AG04450 (cell line): ENCODE measurements at regions of chr12 and their contacts with region 1.

Region 1: DNA sequence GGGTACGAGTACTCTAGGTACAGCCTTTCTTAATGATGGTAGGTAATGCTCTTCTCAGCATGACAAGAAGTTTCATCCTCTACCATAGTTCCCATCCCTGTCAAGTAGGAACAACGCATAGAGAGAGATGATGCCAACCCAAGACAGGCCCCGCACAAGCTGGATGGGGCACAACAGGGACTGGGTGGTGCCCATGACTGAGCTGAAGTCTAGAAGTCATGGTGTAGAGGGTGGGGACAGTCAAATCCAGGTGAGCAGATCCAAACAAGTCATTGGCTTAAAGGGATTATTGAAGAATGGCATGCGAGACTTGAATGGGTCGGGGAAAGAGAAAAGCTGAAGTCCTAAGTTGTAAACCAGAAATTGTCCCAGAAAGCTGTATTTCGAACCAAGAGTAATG is 84.2 kb upstream of the MDM1 start:
- DNase-seq: no peak
- H3K4me3 ChIP-seq: no peak overlapping the region
- H3K27ac ChIP-seq: no peak overlapping the region
- H3K27me3 ChIP-seq: no peaks in the 10 kb centered on the region
- CTCF ChIP-seq: no peak

Region 2: DNA sequence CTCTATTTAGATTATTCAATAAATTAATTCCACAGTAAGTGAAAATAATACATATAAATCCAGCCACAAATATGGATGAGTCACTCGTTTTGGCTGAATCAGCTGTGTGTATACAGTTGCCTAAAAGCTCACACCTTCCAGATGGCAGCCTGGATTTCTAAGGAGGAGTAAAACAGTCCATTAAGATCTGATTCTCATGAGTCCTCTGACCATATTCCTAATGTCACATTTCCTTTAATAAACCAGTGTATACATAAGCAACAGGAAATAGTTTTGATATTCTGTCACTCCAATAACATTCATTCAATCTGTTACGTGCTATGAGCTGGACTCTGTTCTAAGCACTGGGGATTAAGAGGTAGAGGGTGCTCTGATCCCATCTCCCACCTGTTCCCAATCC is 106.0 kb before region 1 on chr12:
- CTCF ChIA-PET with region 1: no interaction called
- POLR2A ChIA-PET with region 1: no interaction called
- DNase-seq: peak; percentile 55
- H3K4me3 ChIP-seq: no peak overlapping the region
- H3K27ac ChIP-seq: no peak overlapping the region
- H3K27me3 ChIP-seq: no peaks in the 10 kb centered on the region
- CTCF ChIP-seq: no peak

Region 3: DNA sequence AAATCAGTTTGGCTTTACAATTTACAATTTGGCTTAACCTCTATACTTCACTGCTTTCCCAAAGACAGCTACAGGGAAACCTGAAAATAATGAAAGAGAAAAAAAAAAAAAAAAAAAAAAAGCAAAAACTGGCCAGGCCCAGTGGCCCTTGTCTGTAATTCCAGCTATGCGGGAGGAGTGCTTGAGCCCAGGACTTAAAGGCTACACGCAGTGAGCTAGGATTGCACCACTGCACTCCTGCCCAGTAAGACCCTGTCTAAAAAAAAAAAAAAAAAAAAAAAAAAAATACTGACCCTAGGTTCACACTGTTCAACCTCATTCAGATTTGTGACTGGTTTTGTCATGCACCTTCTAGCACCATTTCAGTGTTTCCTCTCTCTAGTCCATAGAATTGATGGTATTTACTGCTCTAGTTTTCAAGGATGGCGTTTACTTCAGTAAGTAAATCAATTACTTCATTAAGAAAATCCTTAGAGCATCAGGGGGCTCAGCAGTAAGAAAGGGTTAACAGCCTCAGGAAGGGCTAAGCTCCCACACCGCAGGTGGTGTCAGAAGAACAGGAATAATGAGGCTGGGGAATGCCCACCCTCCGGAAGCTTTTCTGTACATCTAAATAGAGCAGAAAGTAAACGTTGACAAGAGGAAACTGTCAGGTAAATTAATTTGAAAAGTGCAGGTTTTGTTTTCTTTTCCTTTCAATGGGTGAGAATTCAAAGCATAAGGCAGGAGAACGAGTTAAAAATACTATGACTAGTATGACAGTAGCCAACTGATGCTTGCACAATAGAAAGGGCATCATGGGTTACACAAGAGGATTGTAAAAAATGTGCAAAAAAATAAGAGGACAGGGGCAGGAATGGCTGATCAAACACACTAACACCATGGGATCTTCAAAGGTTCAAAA is 30.8 kb after region 1 on chr12:
- CTCF ChIA-PET with region 1: interaction called, 11 read pairs
- POLR2A ChIA-PET with region 1: no interaction called
- DNase-seq: no peak
- H3K4me3 ChIP-seq: no peak overlapping the region
- H3K27ac ChIP-seq: no peak overlapping the region
- H3K27me3 ChIP-seq: no peaks in the 10 kb centered on the region
- CTCF ChIP-seq: no peak

Region 4: GRCh38 chr12:68617160-68617926 is 201.0 kb after region 1 on chr12:
- CTCF ChIA-PET with region 1: no interaction called
- POLR2A ChIA-PET with region 1: no interaction called
- DNase-seq: no peak
- H3K4me3 ChIP-seq: no peak overlapping the region
- H3K27ac ChIP-seq: peak overlapping the region; percentile 59
- H3K27me3 ChIP-seq: no peaks in the 10 kb centered on the region
- CTCF ChIP-seq: no peak